Pancreas (tissue), 10 donors: ENCODE measurements at regions of chr4 and their contacts with region 1.

Region 1: DNA sequence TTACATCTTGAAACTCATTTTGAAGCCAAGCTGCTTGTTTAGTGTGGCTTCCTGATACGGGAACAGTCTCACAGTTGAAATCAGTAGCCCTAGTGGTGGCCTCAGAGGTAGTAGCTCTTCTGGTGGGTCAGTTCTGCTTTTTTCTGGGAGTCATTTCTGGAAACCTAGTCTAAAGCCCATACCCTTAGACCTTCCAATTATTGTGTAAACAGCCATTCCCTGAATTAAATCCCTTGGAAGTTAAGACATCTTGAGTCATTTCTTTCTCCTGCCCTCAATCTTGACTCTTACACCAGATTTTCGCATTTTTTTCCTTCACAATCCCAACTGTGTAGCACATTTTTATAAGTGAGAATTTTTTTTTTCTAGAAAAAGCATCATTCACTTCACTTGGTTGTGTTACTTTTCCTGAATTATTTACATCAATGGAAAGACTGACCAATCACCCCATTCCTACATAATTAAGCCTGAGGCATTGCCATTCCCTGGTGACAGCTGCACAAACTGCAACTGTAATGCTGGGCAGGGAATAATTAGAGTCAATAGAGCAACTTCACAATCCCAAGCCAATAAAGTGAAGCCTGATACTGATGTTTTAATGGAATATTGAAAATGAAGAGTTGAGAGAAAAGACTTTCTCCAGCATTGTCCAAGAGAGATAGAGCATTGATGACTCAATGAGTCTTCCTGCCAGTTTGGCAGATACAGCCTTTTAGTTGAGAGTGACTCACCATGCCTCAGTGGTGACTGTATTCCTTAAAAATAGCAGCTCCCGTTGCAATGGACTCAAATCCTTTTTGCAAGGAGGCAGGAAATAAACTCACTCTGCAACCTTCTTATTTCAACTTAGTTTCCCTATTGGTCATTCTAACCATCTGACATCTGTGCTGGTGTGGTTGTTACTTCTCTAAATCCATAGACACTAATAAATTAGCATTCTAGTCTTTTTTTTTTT is 13.0 kb upstream of the SEPSECS start:
- DNase-seq: peak in 1 of 6 donors; percentile 21
- ATAC-seq: peak in 3 of 4 donors; percentile 74 to 92 (median 83)
- H3K4me3 ChIP-seq: no peak overlapping the region
- H3K27ac ChIP-seq: no peak overlapping the region
- H3K4me1 ChIP-seq: no peaks in the 10 kb centered on the region
- H3K27me3 ChIP-seq: no peaks in the 10 kb centered on the region
- CTCF ChIP-seq: no peak

Region 2: GRCh38 chr4:25361253-25361652 is 188.0 kb after region 1 on chr4:
- intact Hi-C with region 1: no loop called
- DNase-seq: no peak
- ATAC-seq: no peak
- H3K4me3 ChIP-seq: no peak overlapping the region
- H3K27ac ChIP-seq: no peak overlapping the region
- H3K4me1 ChIP-seq: peaks cover 0 to 3% (median 0%) of the 10 kb centered on the region in 3 donors
- H3K27me3 ChIP-seq: no peaks in the 10 kb centered on the region
- CTCF ChIP-seq: no peak

Region 3: GRCh38 chr4:25376754-25377571 is 203.7 kb after region 1 on chr4 and contains the start of gene ANAPC4:
- intact Hi-C with region 1: loop called in 1 of 3 experiments (anchors 10 kb)
- DNase-seq: peak; percentile 93 to 98 (median 97)
- ATAC-seq: peak; percentile 97 to 99 (median 98)
- H3K4me3 ChIP-seq: peak within 1 kb of the TSS; percentile 58 to 98 (median 96)
- H3K27ac ChIP-seq: peak within 1 kb of the TSS; percentile 45 to 75 (median 65)
- H3K4me1 ChIP-seq: peaks cover 0 to 10% (median 0%) of the 10 kb centered on the region in 3 donors
- H3K27me3 ChIP-seq: no peaks in the 10 kb centered on the region
- CTCF ChIP-seq: no peak
- total RNA-seq, gene ANAPC4: 9.0 to 17.6 (median 13.7) TPM

Region 4: GRCh38 chr4:25563071-25563564 is 389.9 kb after region 1 on chr4:
- intact Hi-C with region 1: no loop called
- DNase-seq: no peak
- ATAC-seq: no peak
- H3K4me3 ChIP-seq: no peak overlapping the region
- H3K27ac ChIP-seq: no peak overlapping the region
- H3K4me1 ChIP-seq: no peaks in the 10 kb centered on the region
- H3K27me3 ChIP-seq: no peaks in the 10 kb centered on the region
- CTCF ChIP-seq: no peak